Astrocyte of the cerebellum (primary cell): ENCODE measurements at regions of chr3 and their contacts with region 1.

Region 1: DNA sequence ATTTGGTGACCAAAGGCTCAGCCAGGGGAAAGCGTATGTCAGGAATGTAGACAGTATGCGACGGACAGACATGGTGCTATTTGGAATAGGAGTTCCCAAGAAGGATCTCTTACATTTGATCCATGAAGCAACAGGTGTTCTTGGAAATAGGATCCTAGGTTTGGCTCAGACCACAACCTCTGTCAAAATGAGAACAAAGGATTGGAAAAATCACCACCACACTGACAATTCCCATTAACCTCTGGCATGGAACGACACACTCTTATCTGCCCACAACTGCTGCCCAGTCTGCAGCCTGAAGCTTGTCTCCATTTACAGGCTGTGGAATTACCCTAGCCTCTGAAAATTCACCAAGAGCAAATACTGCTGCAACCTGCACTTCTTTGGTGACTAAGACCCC is 33.6 kb upstream of the LRRN1 start:
- DNase-seq: no peak
- H3K4me3 ChIP-seq: no peak overlapping the region
- CTCF ChIP-seq: no peak

Region 2: GRCh38 chr3:3726549-3726948 is 39.1 kb before region 1 on chr3:
- in situ Hi-C with region 1: loop called (anchors 5 kb)
- DNase-seq: no peak
- H3K4me3 ChIP-seq: no peak overlapping the region
- CTCF ChIP-seq: no peak